ENCODE measurements at regions of chr21 and their contacts with region 1.

Region 1: DNA sequence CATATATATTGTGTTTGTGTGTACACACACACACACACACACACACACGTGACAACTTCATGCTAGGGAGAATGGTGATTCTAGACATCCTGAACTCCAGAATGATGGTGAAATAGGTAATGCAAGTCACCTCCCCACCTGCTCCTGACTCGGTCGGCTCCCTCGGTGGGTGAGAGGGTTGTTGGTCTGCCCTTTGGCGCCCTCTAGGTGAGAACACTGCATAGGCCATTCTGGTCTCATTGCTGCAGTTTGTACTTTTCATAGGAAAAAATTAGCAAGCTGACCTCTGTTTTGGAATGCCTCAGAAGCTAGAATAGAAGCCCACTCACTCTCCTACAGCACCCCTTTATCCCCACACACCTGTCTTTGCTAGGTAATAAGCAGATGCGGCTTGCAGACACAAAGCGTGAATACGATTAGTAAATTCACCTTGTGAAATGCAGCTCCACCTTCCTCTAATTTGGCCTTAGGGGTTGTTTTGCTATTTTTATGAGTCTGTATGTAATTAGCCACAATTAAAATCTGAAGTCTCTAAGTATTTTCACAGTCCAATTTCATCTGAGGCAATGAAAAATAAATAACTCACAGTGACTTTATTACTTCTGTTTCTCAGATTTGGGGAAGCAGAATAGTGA is 130.0 kb upstream of the KCNJ15 start:
- DNase-seq: peak; percentile 34 to 67 (median 63)
- ATAC-seq: peak; percentile 56 to 71
- H3K4me3 ChIP-seq: no peak overlapping the region
- H3K27ac ChIP-seq: no peak overlapping the region
- H3K4me1 ChIP-seq: no peaks in the 10 kb centered on the region
- H3K27me3 ChIP-seq: no peaks in the 10 kb centered on the region

Region 2: DNA sequence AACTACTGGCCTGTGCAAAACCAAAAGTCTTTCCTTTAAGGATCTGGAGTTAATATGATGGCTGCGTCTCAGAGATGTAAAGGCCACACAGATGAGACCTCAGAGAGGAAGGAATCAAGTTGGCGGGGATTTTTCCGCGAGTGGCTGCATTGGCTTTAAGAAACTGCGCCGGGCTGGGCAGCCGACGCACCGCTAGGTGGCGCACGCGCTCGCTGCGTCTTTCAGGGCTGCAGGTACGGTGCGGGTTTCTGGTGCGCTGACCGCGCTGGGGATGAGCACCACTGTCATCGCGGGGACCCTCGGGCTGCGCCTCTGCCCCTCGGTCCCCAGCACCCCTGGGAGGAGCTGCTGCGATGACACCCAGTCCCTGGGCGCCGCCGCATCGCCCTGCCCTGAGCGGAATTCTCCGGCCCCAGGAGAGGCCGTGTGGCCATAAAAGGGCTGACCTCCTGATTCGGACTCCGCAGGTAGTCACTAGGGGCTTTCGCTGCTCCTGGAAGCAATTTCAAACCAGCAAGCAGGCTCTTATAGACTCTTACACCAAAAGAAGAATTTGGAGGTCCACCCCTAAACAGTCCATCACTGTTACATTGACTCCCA is 451.5 kb before region 1 on chr21:
- intact Hi-C with region 1: loop called in 1 of 4 experiments (anchors 10 kb)
- DNase-seq: peak; percentile 58 to 88 (median 82)
- ATAC-seq: peak; percentile 69 to 77
- H3K4me3 ChIP-seq: no peak overlapping the region
- H3K27ac ChIP-seq: no peak overlapping the region
- H3K4me1 ChIP-seq: no peaks in the 10 kb centered on the region
- H3K27me3 ChIP-seq: no peaks in the 10 kb centered on the region

Region 3: DNA sequence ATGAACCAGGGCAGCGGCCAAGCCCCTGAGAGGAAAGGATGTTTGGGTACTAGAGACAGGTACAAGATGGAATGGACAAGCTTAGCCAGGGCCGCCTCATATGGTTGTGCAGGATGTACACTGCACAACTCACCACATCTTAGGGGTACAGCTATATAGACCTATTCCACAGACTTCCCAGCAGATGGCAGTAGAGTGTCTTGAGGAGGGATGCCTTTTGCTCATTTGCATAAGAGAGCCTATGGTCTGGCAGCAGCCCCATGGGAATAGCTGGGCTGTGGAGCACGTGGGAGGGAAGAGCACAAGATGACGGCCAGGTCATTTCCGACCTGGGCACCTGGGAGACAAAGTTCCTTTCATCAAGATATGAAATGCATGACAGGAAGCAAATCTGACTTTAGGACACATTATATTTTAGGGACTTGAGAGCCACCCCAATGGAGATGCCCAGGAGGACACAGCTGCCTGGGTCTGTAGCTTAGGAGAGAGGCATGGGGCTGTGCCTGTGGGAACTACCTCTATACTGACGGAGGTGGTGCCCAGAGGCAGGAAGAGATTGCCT is 426.1 kb before region 1 on chr21:
- intact Hi-C with region 1: loop called in 1 of 4 experiments (anchors 10 kb)
- DNase-seq: peak in 1 of 3 donors; percentile 36
- ATAC-seq: peak; percentile 75 to 84
- H3K4me3 ChIP-seq: no peak overlapping the region
- H3K27ac ChIP-seq: no peak overlapping the region
- H3K4me1 ChIP-seq: no peaks in the 10 kb centered on the region
- H3K27me3 ChIP-seq: no peaks in the 10 kb centered on the region

Region 4: GRCh38 chr21:37711836-37712568 is 414.8 kb before region 1 on chr21:
- intact Hi-C with region 1: loop called in 2 of 4 experiments (anchors 5 to 10 kb)
- DNase-seq: peak; percentile 63 to 82 (median 76)
- ATAC-seq: peak; percentile 80 to 83
- H3K4me3 ChIP-seq: no peak overlapping the region
- H3K27ac ChIP-seq: no peak overlapping the region
- H3K4me1 ChIP-seq: peaks cover 2% of the 10 kb centered on the region
- H3K27me3 ChIP-seq: no peaks in the 10 kb centered on the region

Measured in right cardiac atrium (tissue), 5 donors.